ENCODE measurements at regions of chr4 and their contacts with region 1.

Region 1: GRCh38 chr4:38663801-38664705 is at the start of gene KLF3:
- DNase-seq: no peak
- ATAC-seq: peak; percentile 82
- H3K4me3 Mint-ChIP-seq: peak within 1 kb of the TSS; percentile 84
- H3K27ac Mint-ChIP-seq: peak within 1 kb of the TSS; percentile 88
- H3K4me1 Mint-ChIP-seq: peaks cover 67% of the 10 kb centered on the region
- H3K27me3 Mint-ChIP-seq: no peaks in the 10 kb centered on the region
- CTCF ChIP-seq: no peak
- total RNA-seq, gene KLF3: 14.5 and 15.9 TPM in 2 replicates

Region 2: DNA sequence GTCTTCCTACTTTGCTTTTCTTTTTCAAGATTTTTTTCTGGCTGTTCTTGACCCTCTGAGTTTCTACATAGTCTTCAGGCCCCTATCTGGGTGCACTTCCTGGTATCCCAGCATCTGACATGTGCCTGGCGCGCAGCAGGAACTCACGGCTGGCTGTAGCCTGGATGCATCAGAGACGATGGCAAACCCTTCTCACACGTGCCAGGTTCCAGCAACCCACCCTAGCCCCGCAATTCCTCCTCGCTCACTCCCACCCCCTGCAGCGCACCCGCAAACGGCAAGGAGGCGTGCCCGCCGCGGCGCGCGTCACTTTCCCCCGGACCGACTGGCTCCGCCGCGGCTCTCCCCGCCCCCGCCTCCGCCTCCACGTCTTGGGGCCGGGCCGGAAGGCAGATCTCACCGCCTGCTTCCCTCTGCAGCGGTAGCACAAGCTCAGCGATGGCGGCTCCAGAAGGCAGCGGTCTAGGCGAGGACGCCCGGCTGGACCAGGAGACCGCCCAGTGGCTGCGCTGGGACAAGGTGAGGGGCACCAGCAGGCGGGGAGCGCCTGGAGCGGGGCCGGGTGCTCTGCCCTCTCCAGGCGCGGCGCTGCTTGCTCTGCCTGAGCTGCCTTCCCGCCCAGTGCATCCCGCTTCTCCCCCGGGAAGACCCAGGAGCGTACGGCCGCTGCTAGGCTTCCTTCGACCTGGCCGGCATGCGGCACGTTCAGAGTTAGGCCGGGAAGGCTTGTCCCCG is 837.6 kb before region 1 on chr4 and contains the start of gene PGM2:
- CTCF ChIA-PET with region 1: no interaction called
- POLR2A ChIA-PET with region 1: interaction called, 3 read pairs
- intact Hi-C with region 1: loop called (anchors 10 kb)
- DNase-seq: peak; percentile 91
- ATAC-seq: peak; percentile 96
- H3K4me3 Mint-ChIP-seq: peak within 1 kb of the TSS; percentile 100
- H3K27ac Mint-ChIP-seq: peak within 1 kb of the TSS; percentile 98
- H3K4me1 Mint-ChIP-seq: peaks cover 27% of the 10 kb centered on the region
- H3K27me3 Mint-ChIP-seq: no peaks in the 10 kb centered on the region
- CTCF ChIP-seq: no peak
- total RNA-seq, gene PGM2: 26.4 and 29.6 TPM in 2 replicates

Region 3: DNA sequence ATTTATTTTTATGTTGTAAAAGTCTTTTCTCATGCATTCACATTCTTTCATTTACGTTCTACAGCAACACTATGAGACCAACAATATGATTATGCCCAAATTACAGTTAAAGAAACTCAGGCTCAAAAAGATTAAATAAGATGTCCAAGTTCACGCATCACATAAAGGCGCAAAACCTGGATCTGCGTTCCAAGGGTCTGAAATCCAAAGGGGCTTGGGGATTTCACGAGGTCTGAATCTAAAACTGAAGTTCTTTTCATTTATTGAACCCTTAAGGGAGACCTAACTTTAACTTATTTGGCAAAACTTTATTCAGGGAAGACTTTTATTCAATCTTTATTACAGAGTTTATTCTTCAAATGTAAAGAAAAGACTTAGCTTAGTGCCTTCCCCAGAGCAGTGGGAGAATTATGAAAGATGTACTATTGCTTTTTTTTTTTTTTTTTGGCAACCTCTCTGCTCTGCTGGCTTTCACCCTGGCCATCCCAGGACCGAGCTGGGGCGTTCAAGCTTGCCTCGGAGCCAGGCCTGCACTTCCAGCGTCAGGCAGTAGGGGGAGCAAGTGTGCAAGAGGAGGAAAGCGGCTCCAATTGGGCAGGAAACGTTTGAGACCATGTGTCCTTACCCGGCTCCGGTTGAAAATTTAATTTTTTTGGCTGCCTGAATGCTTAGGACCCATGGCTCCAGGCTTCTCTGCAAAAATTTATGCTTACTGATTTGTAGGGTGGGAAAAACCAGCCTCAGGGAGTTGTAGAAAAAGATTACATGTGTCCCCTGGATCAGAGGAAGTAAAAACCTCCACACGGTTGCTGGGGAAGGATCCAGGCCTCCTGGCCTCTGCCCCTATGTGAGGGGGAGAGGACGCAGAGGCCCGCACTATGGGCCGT is 344.4 kb before region 1 on chr4:
- CTCF ChIA-PET with region 1: interaction called, 15 read pairs
- POLR2A ChIA-PET with region 1: interaction called, 5 read pairs
- intact Hi-C with region 1: no loop called
- DNase-seq: peak; percentile 84
- ATAC-seq: peak; percentile 77
- H3K4me3 Mint-ChIP-seq: peak overlapping the region; percentile 78
- H3K27ac Mint-ChIP-seq: peak overlapping the region; percentile 88
- H3K4me1 Mint-ChIP-seq: peaks cover 28% of the 10 kb centered on the region
- H3K27me3 Mint-ChIP-seq: no peaks in the 10 kb centered on the region
- CTCF ChIP-seq: peak; percentile 72

Region 4: GRCh38 chr4:38641811-38642210 is 22.2 kb before region 1 on chr4:
- CTCF ChIA-PET with region 1: no interaction called
- POLR2A ChIA-PET with region 1: no interaction called
- intact Hi-C with region 1: no loop called
- DNase-seq: no peak
- ATAC-seq: no peak
- H3K4me3 Mint-ChIP-seq: no peak overlapping the region
- H3K27ac Mint-ChIP-seq: no peak overlapping the region
- H3K4me1 Mint-ChIP-seq: no peaks in the 10 kb centered on the region
- H3K27me3 Mint-ChIP-seq: peaks cover 13% of the 10 kb centered on the region
- CTCF ChIP-seq: no peak

Region 5: DNA sequence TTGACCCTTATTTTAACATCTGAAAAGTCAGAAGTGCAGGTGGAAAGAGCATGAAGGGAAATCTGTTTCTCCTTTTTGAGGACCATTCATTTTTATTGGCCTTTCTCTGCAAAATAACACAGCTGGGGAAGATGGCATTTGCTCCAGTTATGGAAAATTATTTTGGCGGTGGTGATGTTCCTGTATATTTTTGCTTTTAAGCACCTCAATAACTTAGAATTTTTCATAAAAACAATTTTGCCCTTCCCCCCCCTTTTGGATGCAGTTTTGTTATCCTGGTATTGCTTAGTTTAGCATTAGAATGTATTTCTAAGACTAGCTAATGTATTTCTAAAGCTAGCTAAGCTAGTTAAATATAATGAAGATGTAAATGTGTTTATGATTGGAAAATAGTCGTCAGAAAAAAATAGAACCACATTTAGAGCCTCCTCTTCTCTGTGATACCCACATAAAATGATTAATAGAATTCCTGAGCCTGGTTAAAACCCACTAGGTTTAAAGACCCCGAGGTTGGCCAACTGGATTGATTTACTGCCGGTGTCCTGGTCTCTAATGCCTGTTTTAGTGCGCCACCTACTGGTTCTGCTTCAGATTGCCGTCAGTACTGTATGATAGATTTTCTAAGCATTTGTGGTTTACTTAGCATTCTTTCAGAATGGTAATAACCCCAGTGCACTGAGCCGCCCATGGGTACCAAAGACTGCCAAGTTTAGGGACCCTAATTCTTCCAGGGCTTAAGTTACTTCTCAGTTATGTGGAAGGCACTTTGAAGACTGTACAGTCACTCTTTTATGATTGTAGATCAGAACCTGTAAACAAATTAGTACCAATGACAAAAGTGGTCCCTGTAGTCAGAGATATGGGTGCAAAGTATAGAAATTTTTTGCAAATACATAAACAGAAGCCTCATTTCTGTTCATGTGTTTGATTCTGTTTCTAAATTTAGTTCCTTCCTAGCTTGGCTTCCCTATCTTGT is 11.4 kb after region 1 on chr4:
- CTCF ChIA-PET with region 1: interaction called, 10 read pairs
- POLR2A ChIA-PET with region 1: no interaction called
- intact Hi-C with region 1: no loop called
- DNase-seq: peak; percentile 56
- ATAC-seq: peak; percentile 75
- H3K4me3 Mint-ChIP-seq: peak overlapping the region; percentile 53
- H3K27ac Mint-ChIP-seq: peak overlapping the region; percentile 46
- H3K4me1 Mint-ChIP-seq: peaks cover 66% of the 10 kb centered on the region
- H3K27me3 Mint-ChIP-seq: no peaks in the 10 kb centered on the region
- CTCF ChIP-seq: peak; percentile 21

Region 6: GRCh38 chr4:38703635-38704034 is 39.6 kb after region 1 on chr4:
- CTCF ChIA-PET with region 1: no interaction called
- POLR2A ChIA-PET with region 1: no interaction called
- intact Hi-C with region 1: no loop called
- DNase-seq: no peak
- ATAC-seq: peak; percentile 60
- H3K4me3 Mint-ChIP-seq: no peak overlapping the region
- H3K27ac Mint-ChIP-seq: no peak overlapping the region
- H3K4me1 Mint-ChIP-seq: peaks cover 30% of the 10 kb centered on the region
- H3K27me3 Mint-ChIP-seq: no peaks in the 10 kb centered on the region
- CTCF ChIP-seq: no peak

Region 7: DNA sequence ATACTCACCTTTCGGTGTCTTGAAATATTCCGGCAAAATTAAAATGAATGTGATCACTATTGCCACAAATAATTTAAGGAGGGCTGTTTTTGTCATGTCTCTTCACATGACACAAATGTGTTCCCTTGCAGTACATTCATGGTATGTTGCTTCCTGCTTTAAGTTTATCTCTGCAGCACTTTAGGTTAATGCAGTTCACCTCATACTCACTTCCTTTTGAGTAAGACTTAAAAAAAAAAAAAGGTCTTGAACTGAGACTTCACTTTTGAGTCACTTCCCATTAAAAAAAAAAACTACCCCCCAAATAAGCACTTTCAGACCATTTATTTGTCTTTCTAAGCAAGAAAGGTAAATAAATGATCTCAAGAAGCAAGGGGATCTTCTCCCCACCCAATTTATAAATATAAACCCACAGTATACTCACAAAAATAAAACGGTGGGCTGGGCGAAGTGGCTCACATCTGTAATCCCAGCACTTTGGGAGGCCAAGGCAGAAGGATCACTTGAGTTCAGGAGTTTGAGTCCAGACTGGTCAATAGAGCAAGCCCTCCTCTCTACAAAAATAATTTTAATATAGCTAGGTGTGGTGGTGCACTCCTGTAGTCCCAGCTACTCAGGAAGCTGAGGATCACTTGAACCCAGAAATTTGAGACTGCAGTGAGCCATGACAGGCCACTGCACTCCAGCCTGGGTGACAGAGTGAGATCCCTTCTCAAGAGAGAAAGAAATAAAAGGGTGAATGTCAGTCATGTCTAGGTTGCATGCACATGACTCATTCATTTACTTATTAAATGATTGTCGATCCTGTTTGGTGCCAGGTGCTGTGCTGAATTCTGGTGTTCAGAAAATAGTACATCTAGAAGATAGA is 368.4 kb after region 1 on chr4 and contains the start of gene TMEM156:
- CTCF ChIA-PET with region 1: no interaction called
- POLR2A ChIA-PET with region 1: interaction called, 3 read pairs
- intact Hi-C with region 1: loop called (anchors 5 kb)
- DNase-seq: no peak
- ATAC-seq: peak; percentile 69
- H3K4me3 Mint-ChIP-seq: peak within 1 kb of the TSS; percentile 83
- H3K27ac Mint-ChIP-seq: peak within 1 kb of the TSS; percentile 93
- H3K4me1 Mint-ChIP-seq: peaks cover 64% of the 10 kb centered on the region
- H3K27me3 Mint-ChIP-seq: no peaks in the 10 kb centered on the region
- CTCF ChIP-seq: no peak
- total RNA-seq, gene TMEM156: 26.0 and 29.5 TPM in 2 replicates